ENCODE measurements at regions of chr19 and their contacts with region 1.

Region 1: DNA sequence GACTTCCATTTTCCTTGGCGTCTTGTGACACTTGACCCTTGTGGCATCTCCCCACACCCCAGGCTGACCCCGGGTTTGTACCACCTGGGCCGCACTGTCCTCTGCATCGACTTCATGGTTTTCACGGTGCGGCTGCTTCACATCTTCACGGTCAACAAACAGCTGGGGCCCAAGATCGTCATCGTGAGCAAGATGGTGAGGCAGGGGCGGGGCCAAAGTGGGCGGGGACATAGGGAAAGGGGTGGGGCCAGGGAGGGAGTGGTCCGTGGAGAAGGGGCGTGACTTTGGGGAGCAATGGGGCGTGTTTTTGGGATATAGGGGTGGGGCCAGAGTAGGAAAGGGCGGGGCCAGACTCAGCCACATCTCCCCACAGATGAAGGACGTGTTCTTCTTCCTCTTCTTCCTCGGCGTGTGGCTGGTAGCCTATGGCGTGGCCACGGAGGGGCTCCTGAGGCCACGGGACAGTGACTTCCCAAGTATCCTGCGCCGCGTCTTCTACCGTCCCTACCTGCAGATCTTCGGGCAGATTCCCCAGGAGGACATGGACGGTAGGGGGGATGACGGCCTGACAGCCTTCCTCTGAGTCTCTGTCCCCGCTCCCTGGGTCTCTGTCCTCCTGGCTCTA is 42.8 kb downstream of the TRPM4 start:
- DNase-seq: no peak
- ATAC-seq: no peak
- H3K4me3 ChIP-seq: no peak overlapping the region
- H3K27ac ChIP-seq: no peak overlapping the region
- H3K4me1 ChIP-seq: no peaks in the 10 kb centered on the region
- H3K27me3 ChIP-seq: no peaks in the 10 kb centered on the region

Region 2: DNA sequence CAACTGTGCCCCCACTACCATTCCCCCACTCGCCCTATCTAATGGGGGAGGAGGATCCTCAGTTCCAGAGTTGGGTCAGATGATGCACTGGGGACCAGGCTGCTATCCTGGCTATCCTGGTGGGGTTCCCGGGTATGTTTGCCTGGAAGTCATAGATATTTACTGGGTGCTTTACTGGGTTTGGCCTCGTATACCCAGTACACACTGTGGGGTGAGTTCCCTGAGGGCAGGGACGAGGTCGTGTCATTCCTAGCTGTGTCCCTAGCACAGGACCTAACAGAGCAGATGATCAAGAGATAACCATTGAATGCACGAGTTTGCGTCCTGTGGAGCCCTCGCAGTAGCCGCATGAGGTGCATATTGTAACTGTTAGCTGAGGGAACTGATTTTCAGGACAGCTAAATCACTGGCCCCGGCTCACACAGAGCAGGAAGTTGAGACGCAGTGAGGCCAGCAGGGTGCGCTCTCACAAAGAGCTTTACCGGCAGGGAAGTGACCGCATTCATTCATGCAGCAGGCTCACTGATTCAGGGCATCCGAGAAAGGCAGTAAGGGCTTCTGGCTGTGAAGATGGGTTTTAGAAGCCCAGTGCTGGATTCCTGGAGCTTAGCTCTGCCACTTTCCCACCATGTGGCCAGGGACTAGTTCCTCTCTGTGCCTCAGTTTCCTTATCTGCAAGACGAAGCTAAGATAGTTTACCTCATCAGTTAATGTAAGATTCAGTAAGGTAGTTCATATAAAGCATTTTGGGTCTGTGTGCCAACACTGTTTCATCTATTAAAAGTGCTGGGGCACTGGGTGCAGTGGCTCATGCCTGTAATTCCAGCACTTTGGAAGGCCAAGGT is 200.6 kb before region 1 on chr19:
- intact Hi-C with region 1: no loop called
- DNase-seq: peak; percentile 77 to 83
- ATAC-seq: no peak
- H3K4me3 ChIP-seq: no peak overlapping the region
- H3K27ac ChIP-seq: no peak overlapping the region
- H3K4me1 ChIP-seq: no peaks in the 10 kb centered on the region
- H3K27me3 ChIP-seq: no peaks in the 10 kb centered on the region

Region 3: GRCh38 chr19:49097455-49098288 is 102.7 kb before region 1 on chr19:
- intact Hi-C with region 1: loop called (anchors 5 kb)
- DNase-seq: peak in 1 of 2 donors; percentile 74
- ATAC-seq: peak; percentile 84
- H3K4me3 ChIP-seq: no peak overlapping the region
- H3K27ac ChIP-seq: no peak overlapping the region
- H3K4me1 ChIP-seq: no peaks in the 10 kb centered on the region
- H3K27me3 ChIP-seq: no peaks in the 10 kb centered on the region

Region 4: DNA sequence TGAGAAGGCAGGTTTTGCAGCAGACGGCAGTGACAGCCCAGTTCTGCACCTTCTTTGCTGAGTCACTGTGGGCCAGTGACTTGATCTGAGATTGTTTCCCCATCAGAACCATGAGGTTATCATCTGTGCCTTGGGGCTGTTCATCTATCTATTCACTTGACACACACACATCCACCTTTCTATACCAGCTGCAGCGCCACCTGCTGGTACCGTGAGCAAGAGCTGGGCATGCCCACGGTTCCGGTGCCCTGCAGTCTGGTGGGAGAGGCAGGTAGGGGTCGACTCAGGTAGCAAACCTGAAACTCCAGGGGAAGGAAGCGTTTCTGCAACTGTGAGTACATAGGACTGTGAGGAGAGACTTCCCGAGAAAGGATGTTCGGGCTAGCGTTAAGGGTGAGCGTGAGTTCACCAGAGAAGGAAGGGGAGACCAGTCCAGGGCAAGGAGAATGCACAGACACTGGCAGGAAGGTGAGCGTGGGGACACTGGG is 93.7 kb before region 1 on chr19:
- intact Hi-C with region 1: loop called in 1 of 2 experiments (anchors 5 kb)
- DNase-seq: no peak
- ATAC-seq: no peak
- H3K4me3 ChIP-seq: no peak overlapping the region
- H3K27ac ChIP-seq: no peak overlapping the region
- H3K4me1 ChIP-seq: no peaks in the 10 kb centered on the region
- H3K27me3 ChIP-seq: no peaks in the 10 kb centered on the region

Region 5: DNA sequence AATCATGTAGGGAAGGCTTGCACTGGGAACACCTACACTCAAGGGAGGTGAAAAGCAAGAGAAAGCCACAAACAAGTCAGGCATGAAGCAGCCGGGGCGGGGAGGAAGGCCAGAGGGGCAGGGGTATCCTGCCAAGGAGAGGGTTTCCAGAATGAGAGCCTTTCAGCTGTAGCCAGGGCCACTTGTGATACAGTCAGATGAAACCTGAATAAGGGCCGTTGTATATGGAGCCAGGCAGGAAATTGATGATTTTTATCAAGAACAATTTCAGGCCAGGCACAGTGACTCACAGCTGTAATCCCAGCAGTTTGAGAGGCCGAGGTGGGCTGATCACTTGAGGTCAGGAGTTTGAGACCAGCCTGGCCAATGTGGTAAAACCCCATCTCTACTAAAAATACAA is 38.4 kb before region 1 on chr19:
- intact Hi-C with region 1: loop called in 1 of 2 experiments (anchors 5 kb)
- DNase-seq: peak; percentile 9 to 36
- ATAC-seq: no peak
- H3K4me3 ChIP-seq: no peak overlapping the region
- H3K27ac ChIP-seq: no peak overlapping the region
- H3K4me1 ChIP-seq: peaks cover 0 to 3% of the 10 kb centered on the region in 2 donors
- H3K27me3 ChIP-seq: no peaks in the 10 kb centered on the region

Region 6: GRCh38 chr19:49213791-49214190 is 13.4 kb after region 1 on chr19:
- intact Hi-C with region 1: no loop called
- DNase-seq: no peak
- ATAC-seq: no peak
- H3K4me3 ChIP-seq: no peak overlapping the region
- H3K27ac ChIP-seq: no peak overlapping the region
- H3K4me1 ChIP-seq: no peaks in the 10 kb centered on the region
- H3K27me3 ChIP-seq: no peaks in the 10 kb centered on the region

Region 7: GRCh38 chr19:49224856-49225255 is 24.5 kb after region 1 on chr19:
- intact Hi-C with region 1: no loop called
- DNase-seq: peak in 1 of 2 donors; percentile 56
- ATAC-seq: no peak
- H3K4me3 ChIP-seq: no peak overlapping the region
- H3K27ac ChIP-seq: no peak overlapping the region
- H3K4me1 ChIP-seq: no peaks in the 10 kb centered on the region
- H3K27me3 ChIP-seq: no peaks in the 10 kb centered on the region

Measured in aorta (tissue), 5 donors.